Endothelial cell of umbilical vein (primary cell): ENCODE measurements at regions of chr2 and their contacts with region 1.

Region 1: DNA sequence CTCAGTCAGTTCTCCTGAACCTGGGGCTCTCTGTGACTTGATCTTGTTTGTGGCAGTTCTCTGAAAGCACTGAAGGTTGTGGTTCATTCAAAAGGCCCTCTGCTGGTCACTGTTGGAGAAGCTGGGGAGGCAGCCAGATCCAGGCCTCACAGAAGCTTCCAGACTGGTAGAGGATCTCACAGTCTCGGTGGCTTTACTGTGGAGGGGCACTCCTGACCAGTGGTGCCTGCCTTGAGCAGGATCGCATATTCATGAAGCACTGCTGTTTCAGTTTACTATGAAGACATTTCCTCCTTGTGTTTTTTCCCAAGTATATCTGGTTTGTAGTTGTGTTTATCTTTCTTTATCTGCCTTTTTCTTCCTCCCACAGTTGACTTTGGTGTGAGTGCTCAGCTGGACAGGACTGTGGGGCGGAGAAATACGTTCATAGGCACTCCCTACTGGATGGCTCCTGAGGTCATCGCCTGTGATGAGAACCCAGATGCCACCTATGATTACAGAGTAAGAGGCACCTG is 133.9 kb downstream of the MAP4K4 start:
- DNase-seq: peak; percentile 85
- H3K4me3 ChIP-seq: no peak overlapping the region
- H3K27ac ChIP-seq: peak overlapping the region; percentile 18
- H3K4me1 ChIP-seq: peaks cover 33% of the 10 kb centered on the region
- H3K27me3 ChIP-seq: no peaks in the 10 kb centered on the region
- CTCF ChIP-seq: peak; percentile 68 to 74
- POLR2A ChIP-seq: no peak

Region 2: DNA sequence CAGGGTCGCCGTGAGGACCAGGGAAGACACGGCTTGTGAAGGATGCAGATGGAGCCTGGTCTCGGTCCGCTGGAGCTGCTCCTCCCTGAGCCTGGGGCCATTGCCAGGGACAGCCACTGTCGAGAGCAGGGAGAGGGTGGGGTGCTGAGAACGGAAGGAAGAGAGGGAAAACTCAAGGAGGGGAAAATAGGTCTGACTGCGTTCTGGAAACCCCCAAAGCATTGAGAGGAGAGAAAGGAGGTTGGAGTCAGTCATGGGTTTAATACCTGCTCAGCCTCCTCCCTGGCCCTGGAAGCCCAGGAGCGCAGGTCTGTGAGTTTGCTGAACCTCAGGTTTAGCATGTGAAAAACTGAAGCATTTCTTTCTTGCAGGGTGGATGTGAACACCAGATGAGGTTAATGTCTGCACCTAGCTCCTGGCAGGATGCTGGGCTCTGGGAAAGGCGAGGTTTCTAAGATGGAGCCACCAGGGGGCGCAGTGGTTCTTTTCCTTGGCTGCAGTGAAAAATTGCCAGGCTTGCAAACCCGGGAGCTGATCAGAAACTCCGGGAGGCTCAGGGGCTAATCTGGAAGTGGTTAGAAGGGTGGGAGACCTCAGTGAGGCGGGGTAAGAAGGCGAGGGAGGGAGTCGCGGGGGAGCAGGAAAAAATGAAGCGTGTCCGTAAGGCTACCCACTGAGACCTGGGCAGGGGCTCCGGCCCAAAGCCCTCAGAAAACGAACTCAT is 489.3 kb before region 1 on chr2:
- CTCF ChIA-PET with region 1: interaction called, 47 read pairs
- POLR2A ChIA-PET with region 1: no interaction called
- dilution Hi-C with region 1: no loop called
- intact Hi-C with region 1: loop called (anchors 5 kb)
- DNase-seq: peak; percentile 68
- H3K4me3 ChIP-seq: no peak overlapping the region
- H3K27ac ChIP-seq: no peak overlapping the region
- H3K4me1 ChIP-seq: peaks cover 9% of the 10 kb centered on the region
- H3K27me3 ChIP-seq: no peaks in the 10 kb centered on the region
- CTCF ChIP-seq: peak; percentile 75 to 87
- POLR2A ChIP-seq: no peak

Region 3: GRCh38 chr2:101463891-101464641 is 367.3 kb before region 1 on chr2:
- CTCF ChIA-PET with region 1: interaction called, 10 read pairs
- POLR2A ChIA-PET with region 1: no interaction called
- dilution Hi-C with region 1: no loop called
- intact Hi-C with region 1: no loop called
- DNase-seq: peak; percentile 95
- H3K4me3 ChIP-seq: no peak overlapping the region
- H3K27ac ChIP-seq: peak overlapping the region; percentile 89
- H3K4me1 ChIP-seq: peaks cover 39% of the 10 kb centered on the region
- H3K27me3 ChIP-seq: no peaks in the 10 kb centered on the region
- CTCF ChIP-seq: no peak
- POLR2A ChIP-seq: peak; percentile 64

Region 4: GRCh38 chr2:101580528-101580927 is 250.9 kb before region 1 on chr2:
- CTCF ChIA-PET with region 1: no interaction called
- POLR2A ChIA-PET with region 1: no interaction called
- dilution Hi-C with region 1: no loop called
- intact Hi-C with region 1: no loop called
- DNase-seq: no peak
- H3K4me3 ChIP-seq: no peak overlapping the region
- H3K27ac ChIP-seq: no peak overlapping the region
- H3K4me1 ChIP-seq: peaks cover 6% of the 10 kb centered on the region
- H3K27me3 ChIP-seq: peaks cover 0 to 6% of the 10 kb centered on the region in 2 experiments
- CTCF ChIP-seq: no peak
- POLR2A ChIP-seq: no peak

Region 5: DNA sequence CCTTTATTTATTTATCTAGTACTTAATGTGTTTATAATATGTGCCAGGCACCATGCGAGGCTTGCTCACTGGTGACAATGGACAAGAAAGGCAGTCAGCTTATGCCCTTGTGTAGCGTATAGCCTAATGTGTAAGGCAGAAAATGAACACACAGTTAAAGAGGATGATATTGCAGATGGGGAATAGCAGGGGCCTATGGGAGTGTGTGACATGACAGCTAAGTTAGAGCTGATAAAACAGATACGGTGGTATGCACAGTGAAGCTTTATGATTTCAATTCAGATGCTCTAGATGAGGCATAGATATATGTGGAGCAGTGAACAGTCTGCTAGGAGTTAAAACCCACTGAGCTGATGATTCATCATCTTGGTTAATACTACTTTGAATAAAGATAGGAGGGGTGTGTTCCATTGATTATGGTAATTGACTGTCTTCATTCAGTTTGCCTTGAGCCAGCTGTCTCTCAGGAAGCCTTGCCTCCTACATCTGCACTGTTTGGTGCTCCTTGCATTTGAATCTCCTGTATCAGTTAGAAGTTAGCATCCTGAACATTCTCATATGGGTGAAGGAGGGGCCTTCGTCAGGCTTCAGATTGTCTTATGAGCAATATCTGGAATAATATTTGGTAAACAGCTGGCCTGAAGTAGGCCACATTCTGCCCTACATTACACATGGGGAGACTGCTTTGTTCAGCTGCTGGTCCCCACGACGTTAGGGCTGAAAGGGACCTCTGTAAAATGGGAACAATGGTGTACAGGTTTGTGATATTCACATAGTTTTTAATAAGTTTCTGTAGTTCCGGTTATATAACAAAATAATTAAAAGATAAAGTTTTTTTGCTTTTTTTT is 120.7 kb before region 1 on chr2:
- CTCF ChIA-PET with region 1: interaction called, 18 read pairs
- POLR2A ChIA-PET with region 1: no interaction called
- dilution Hi-C with region 1: no loop called
- intact Hi-C with region 1: no loop called
- DNase-seq: peak; percentile 28
- H3K4me3 ChIP-seq: no peak overlapping the region
- H3K27ac ChIP-seq: no peak overlapping the region
- H3K4me1 ChIP-seq: peaks cover 30% of the 10 kb centered on the region
- H3K27me3 ChIP-seq: no peaks in the 10 kb centered on the region
- CTCF ChIP-seq: no peak
- POLR2A ChIP-seq: no peak

Region 6: DNA sequence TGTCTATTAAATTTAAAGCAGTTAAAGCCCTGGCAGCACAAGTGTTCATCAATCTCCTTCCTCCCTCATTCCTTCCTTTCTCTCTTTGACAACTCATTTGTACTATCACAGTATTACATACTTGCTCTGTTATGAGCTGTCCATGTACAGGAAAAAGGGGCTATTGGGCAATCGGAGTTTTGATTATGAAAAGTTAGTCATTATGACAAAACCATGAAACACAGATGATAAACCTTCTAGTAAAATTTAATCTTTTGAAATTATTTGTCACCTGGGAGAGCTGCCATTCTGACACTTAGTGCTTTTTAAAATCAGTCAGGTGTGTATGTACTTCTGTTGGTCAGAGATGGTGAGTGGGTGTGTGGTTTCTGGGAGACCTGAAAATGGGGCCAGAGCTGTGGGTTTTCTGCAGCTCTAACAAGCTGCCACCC is 94.5 kb before region 1 on chr2:
- CTCF ChIA-PET with region 1: interaction called, 11 read pairs
- POLR2A ChIA-PET with region 1: no interaction called
- dilution Hi-C with region 1: no loop called
- intact Hi-C with region 1: no loop called
- DNase-seq: peak; percentile 62
- H3K4me3 ChIP-seq: no peak overlapping the region
- H3K27ac ChIP-seq: no peak overlapping the region
- H3K4me1 ChIP-seq: peaks cover 45% of the 10 kb centered on the region
- H3K27me3 ChIP-seq: no peaks in the 10 kb centered on the region
- CTCF ChIP-seq: no peak
- POLR2A ChIP-seq: no peak

Region 7: DNA sequence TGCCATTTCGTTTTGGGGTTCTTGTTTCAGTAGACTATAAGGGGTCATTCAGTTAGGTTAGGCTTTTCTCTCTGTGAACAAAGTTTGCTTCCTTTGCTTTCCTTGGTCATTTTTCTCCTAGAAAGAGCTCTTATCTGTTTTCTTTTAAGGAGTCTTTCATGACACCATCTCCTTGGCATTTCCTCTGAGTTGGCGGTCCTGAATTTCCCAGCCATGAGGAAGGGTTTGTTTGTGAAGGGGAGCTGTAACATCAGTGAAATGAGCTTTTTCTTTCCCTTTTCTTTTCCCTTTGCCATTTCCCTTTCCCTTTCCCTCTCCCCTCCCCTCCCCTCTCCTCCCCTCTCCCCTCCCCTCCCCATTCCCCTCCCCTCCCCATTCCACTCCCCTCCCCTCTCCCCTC is 72.2 kb before region 1 on chr2:
- CTCF ChIA-PET with region 1: interaction called, 22 read pairs
- POLR2A ChIA-PET with region 1: no interaction called
- dilution Hi-C with region 1: no loop called
- intact Hi-C with region 1: no loop called
- DNase-seq: peak; percentile 95
- H3K4me3 ChIP-seq: no peak overlapping the region
- H3K27ac ChIP-seq: peak overlapping the region; percentile 73
- H3K4me1 ChIP-seq: peaks cover 41% of the 10 kb centered on the region
- H3K27me3 ChIP-seq: no peaks in the 10 kb centered on the region
- CTCF ChIP-seq: no peak
- POLR2A ChIP-seq: no peak

Region 8: DNA sequence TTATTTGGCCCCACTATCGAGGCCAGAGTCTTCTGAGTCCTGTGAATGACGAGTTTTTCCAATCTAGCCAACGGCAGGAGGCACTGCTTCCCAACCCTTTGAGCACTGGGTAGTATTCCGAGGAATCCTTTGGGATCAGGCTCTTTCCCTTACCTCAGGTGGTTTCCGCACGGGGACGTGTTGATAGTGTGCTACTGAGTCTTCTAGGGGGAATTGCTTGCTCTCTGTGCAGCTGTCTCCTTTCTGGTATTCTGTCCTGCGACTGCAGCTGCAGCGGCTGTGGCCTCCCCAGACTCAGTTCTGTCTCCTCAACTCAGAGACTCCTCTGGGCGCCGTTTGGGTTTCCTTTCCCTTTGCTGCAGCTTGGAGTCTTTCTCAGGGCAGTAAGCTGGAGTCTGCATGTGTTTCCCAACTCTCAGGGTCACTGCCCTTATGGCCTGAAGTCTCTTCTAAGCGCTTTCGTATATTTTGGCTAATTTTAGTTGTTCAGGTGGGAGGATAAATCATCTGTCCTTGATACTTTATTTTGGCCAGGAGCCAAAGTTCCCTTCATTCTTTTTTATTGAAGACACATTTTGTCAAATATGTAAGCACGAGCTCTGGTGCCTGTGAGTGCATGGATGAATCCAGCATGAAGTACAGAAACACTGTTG is 15.5 kb before region 1 on chr2:
- CTCF ChIA-PET with region 1: interaction called, 16 read pairs
- POLR2A ChIA-PET with region 1: no interaction called
- dilution Hi-C with region 1: no loop called
- intact Hi-C with region 1: no loop called
- DNase-seq: no peak
- H3K4me3 ChIP-seq: no peak overlapping the region
- H3K27ac ChIP-seq: no peak overlapping the region
- H3K4me1 ChIP-seq: peaks cover 45% of the 10 kb centered on the region
- H3K27me3 ChIP-seq: no peaks in the 10 kb centered on the region
- CTCF ChIP-seq: no peak
- POLR2A ChIP-seq: no peak